HAP-1 (cell line): ENCODE measurements at regions of chr19 and their contacts with region 1.

Region 1: DNA sequence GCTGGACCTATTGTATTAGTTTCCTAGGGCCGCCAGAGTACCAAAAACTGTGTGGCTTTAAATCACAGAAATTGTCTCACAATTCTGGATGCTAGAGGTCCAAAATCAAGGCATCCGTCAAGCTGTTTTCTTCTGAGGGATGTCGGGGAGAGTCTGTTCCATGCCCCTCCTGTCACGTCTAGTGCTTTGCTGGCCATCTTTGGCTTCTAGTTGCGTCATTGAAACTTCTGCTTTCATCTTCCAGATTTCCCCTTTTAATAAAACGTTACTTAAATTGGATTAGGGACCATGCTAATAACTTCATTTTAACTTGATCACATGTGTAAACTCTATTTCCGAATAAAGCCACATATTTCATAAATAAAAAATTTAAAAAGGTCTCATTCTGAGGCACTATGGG is 47.5 kb downstream of the TRPM4 start:
- DNase-seq: no peak
- H3K4me3 ChIP-seq: no peak overlapping the region
- H3K4me1 ChIP-seq: no peaks in the 10 kb centered on the region
- H3K27me3 ChIP-seq: no peaks in the 10 kb centered on the region

Region 2: GRCh38 chr19:49097455-49098288 is 107.4 kb before region 1 on chr19:
- in situ Hi-C with region 1: loop called (anchors 5 kb)
- DNase-seq: peak; percentile 52 to 83
- H3K4me3 ChIP-seq: no peak overlapping the region
- H3K4me1 ChIP-seq: no peaks in the 10 kb centered on the region
- H3K27me3 ChIP-seq: no peaks in the 10 kb centered on the region

Region 3: GRCh38 chr19:49247676-49248075 is 42.6 kb after region 1 on chr19:
- in situ Hi-C with region 1: no loop called
- DNase-seq: no peak
- H3K4me3 ChIP-seq: no peak overlapping the region
- H3K4me1 ChIP-seq: no peaks in the 10 kb centered on the region
- H3K27me3 ChIP-seq: no peaks in the 10 kb centered on the region